Aorta (tissue), 5 donors: ENCODE measurements at regions of chr14 and their contacts with region 1.

Region 1: GRCh38 chr14:61461808-61462275 is 140.5 kb downstream of the PRKCH start:
- DNase-seq: no peak
- ATAC-seq: peak; percentile 82
- H3K4me3 ChIP-seq: no peak overlapping the region
- H3K27ac ChIP-seq: no peak overlapping the region
- H3K4me1 ChIP-seq: no peaks in the 10 kb centered on the region
- H3K27me3 ChIP-seq: no peaks in the 10 kb centered on the region

Region 2: DNA sequence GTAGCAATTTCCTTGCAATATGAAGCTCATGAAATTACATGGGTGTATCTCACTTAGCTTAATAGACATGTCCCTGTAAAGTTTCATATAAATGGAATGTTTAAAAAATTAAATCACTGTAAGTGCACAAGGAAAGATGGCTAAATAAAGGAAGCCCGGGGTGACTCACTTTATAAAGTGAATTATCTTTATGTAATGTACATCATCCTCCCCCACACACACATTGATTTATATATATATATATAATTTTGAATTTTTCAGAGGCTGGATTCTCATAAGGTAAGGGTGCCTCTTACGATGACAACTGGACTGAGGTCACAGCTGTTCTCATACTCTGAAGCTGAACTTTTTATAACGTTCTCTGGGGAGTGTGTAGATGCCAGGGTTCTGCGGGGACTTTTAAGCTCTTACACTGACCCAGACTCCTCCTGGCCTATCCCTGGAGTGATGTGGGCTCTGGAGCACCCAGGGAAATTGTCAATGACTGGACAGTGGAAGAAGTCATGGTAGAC is 124.8 kb after region 1 on chr14:
- intact Hi-C with region 1: no loop called
- DNase-seq: no peak
- ATAC-seq: peak; percentile 47
- H3K4me3 ChIP-seq: no peak overlapping the region
- H3K27ac ChIP-seq: peak overlapping the region; percentile 80 to 87
- H3K4me1 ChIP-seq: peaks cover 9 to 17% of the 10 kb centered on the region in 2 donors
- H3K27me3 ChIP-seq: no peaks in the 10 kb centered on the region

Region 3: DNA sequence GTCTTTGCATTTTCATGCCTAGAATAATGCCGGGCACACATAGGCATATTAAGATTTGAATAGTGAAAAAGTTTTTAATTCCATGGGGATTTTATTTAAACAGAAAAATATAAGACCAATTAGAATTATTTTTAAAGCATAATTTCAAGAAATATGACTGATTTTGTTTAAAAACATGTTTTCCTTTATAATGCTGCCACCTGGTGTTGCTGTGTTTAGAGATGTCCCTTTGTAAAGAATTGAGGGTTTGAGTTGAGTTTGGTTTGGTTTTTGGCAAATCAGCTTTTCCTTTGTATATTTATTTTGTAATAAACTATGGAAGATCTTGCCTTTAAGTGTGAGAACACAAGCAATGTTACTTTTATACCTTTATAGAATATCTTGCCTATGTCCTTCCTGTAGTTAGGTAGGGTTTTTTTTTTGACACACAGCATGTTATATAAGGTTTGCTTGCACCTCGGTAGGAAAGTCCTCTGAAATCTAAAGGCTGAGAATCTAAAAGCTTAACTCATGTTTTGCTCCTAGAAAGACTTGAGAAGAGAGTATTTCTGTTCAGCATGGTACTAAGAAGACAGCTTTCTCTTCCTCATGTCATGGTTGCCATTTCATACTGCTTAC is 269.0 kb after region 1 on chr14:
- intact Hi-C with region 1: loop called in 1 of 2 experiments (anchors 5 kb)
- DNase-seq: no peak
- ATAC-seq: no peak
- H3K4me3 ChIP-seq: no peak overlapping the region
- H3K27ac ChIP-seq: no peak overlapping the region
- H3K4me1 ChIP-seq: no peaks in the 10 kb centered on the region
- H3K27me3 ChIP-seq: no peaks in the 10 kb centered on the region

Region 4: DNA sequence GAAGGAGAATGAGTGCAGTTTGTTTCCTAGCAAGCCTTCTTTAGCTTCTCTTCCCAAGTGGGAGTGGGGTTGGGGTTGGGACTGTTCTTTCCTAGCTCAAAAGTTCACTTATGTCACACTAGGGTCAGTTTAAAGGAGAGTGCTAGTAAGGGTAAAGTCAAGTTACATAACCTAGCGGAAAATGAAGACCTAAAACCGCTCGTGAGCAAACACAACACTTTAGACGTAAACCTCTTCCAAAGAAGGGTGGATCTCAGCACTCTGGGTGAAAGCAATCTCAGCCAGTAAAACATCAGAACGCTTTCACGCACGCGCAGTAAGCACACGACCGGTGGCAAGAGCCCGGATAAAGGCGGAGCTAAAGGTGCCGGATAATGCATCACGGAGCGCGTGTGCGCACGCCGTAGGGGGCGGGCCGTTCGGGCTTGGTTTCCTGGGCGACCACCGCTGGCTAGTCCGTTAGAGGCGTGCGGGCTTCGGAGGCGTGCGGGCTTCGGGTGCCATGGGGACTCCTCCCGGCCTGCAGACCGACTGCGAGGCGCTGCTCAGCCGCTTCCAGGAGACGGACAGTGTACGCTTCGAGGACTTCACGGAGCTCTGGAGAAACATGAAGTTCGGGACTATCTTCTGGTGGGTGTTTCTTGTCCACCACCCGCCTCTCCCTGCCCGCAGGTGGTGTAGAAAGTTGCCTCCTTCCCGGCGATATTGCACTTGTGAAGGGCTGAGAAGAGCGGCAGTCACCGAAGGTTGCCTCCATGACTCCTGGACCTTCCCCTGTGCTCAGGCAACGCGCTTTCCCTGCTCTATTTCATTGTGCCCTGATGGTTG is 300.3 kb after region 1 on chr14 and contains the start of gene SNAPC1:
- intact Hi-C with region 1: loop called in 1 of 2 experiments (anchors 5 kb)
- DNase-seq: peak; percentile 98 to 99
- ATAC-seq: peak; percentile 100
- H3K4me3 ChIP-seq: peak within 1 kb of the TSS; percentile 41 to 80
- H3K27ac ChIP-seq: peak within 1 kb of the TSS in 1 of 2 donors; percentile 61
- H3K4me1 ChIP-seq: peaks cover 0 to 2% of the 10 kb centered on the region in 2 donors
- H3K27me3 ChIP-seq: no peaks in the 10 kb centered on the region
- total RNA-seq, gene SNAPC1: 5.4 to 7.0 TPM

Region 5: DNA sequence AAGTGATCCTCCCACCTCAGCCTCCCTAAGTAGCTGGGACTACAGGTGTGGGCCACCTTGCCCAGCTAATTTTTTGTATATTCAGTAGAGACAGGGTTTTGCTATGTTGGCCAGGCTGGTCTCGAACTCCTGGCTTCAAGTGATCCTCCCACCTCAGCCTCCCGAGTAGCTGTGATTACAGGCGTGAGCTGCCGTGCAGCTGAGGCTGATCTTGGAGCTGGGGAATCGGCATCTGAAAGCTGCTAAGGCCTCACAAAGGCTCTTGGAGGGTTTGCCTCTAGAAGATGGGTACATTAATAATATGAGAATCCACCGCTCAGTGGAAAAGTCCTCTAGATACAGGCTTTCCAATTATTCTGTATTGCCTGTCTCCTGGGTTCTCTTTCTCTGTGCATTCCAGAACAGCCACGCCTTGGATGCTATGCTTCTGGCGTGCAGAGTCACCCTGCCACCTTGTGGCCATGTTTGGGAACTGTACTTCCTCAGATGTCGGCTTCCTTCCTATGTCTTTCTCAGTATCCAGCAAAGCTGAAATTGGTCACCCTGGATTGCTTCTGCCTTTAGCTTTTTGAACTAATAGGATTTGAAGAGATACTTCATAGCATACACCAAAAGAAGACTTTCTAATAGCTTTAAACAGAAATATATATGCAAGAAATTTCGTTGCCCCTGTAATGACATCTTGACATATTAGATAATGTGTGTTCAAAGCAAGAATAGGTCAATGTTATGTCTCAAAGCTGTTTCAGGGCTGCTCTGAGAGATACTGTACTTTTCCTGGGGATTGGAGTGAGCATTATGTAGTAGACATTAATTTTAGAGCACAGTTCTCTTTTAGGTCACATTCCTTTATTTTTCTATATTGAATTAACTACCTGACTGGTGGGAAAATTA is 375.7 kb after region 1 on chr14:
- intact Hi-C with region 1: loop called (anchors 2 kb)
- DNase-seq: peak; percentile 81 to 87
- ATAC-seq: peak; percentile 93
- H3K4me3 ChIP-seq: no peak overlapping the region
- H3K27ac ChIP-seq: no peak overlapping the region
- H3K4me1 ChIP-seq: no peaks in the 10 kb centered on the region
- H3K27me3 ChIP-seq: no peaks in the 10 kb centered on the region

Region 6: DNA sequence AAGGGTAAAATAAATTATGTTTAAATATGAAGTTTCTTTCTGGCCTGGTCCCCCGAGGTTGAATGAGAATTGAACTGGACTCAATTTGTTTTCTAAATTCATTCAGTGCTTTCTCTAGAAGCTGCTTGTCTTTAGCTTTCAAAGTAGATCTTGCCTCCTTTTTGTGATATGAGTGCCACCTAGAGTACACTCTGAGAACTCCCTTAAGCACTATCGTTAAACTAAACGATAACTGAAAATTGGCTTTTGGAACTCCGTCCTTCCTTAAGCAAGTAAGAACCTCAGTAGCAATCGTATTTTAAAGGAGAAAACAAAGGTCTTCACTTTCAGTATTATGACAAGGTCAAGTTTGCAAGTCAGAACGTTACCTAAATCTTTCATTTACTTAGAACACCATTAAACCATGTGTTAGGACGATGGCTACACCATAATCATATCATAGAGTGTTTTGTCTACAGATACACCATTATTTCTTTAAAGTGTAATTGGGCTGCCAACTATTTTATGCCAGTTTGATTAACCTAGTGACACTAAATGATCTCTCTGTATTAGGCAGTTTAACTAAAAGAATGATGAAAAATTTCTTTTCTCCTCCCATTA is 665.1 kb after region 1 on chr14:
- intact Hi-C with region 1: loop called (anchors 5 to 10 kb)
- DNase-seq: no peak
- ATAC-seq: no peak
- H3K4me3 ChIP-seq: no peak overlapping the region
- H3K27ac ChIP-seq: no peak overlapping the region
- H3K4me1 ChIP-seq: no peaks in the 10 kb centered on the region
- H3K27me3 ChIP-seq: no peaks in the 10 kb centered on the region